ENCODE measurements at regions of chr17 and their contacts with region 1.

Region 1: GRCh38 chr17:42761638-42762037 is 611 bp downstream of the RAMP2 start:
- DNase-seq: no peak
- ATAC-seq: peak; percentile 21

Region 2: DNA sequence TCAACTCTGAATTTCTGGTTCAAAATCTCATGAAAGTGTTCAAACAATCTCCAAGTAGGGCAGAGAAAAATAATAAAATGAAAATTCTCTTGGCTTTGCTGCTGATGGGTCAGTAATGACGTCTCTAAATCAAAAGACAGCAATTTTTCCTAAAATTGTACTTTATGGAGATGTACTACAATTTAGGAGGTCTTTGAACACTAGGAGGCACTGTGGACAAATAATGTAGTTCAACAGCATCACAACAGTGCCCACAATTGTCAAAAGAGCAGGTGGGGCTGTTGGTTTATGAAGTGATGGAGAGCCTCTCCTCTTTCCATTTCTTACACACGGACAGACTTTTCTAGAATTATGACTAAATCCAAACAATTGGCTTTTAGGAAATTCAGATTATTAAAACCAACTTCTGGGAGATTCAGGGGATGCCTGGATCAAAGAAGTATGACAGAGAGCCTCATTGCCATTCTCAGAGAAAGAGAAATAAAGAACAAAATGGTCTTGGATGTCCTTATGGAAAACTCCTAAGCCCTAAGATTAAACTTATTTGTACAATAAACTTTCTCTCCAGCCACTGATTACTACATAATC is 40.5 kb before region 1 on chr17:
- intact Hi-C with region 1: loop called (anchors 2 kb)
- DNase-seq: no peak
- ATAC-seq: peak; percentile 93

Region 3: GRCh38 chr17:42779936-42780850 is 18.6 kb after region 1 on chr17 and contains the start of gene WNK4:
- intact Hi-C with region 1: no loop called
- DNase-seq: no peak
- ATAC-seq: peak; percentile 67
- total RNA-seq, gene WNK4: 1.4 TPM